A549 (cell line): ENCODE measurements at regions of chr9 and their contacts with region 1.

Region 1: GRCh38 chr9:133742849-133743444 is 4.8 kb upstream of the SARDH start:
- DNase-seq: peak; percentile 78 to 95
- ATAC-seq: peak; percentile 86 to 96
- H3K4me3 ChIP-seq: no peak overlapping the region
- H3K27ac ChIP-seq: no peak overlapping the region
- H3K4me1 ChIP-seq: no peaks in the 10 kb centered on the region; the same call in 2 of the 3 replicates
- CTCF ChIP-seq: peak; percentile 86
- EP300 ChIP-seq: no peak
- POLR2A ChIP-seq: no peak
- RAD21 ChIP-seq: peak; percentile 41 to 59; a peak in 3 of 5 replicates

Region 2: DNA sequence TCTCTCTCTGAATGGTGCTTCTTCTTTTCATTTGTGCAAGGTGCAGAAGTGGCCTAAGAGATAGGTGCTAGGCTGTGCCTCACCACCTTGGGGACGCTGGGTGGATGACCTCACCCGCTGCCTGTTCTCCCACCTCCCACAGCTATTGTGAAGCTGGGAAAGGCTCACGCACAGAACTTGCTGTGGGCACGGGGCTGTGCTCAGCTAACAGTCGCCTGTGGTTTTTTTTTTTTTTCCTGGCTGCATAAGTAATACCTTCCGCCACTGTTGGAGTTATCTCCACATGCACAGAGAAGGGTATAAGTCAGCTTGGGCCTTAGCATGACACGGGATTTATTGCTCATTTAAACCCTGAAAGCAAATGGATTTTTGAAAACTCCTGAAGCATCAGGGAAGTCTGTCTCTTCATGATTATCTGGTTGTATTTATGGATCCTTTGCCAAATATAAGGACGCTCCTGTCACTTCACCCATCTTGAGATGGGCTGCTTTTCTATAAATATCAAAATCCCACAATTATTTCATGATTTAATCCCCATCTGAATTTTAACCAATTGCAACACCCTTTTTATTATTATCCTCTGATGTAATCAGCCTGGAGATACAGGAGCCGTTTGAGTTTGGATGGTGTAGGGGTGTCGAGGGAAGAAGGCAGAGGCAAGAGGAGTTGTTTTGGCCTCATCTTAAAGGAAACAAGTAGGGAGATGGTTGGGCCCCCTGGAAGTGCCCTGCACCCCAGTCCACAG is 97.8 kb before region 1 on chr9:
- CTCF ChIA-PET with region 1: no interaction called
- POLR2A ChIA-PET with region 1: no interaction called
- DNase-seq: no peak
- ATAC-seq: no peak
- H3K4me3 ChIP-seq: no peak overlapping the region
- H3K27ac ChIP-seq: no peak overlapping the region
- H3K4me1 ChIP-seq: no peaks in the 10 kb centered on the region
- CTCF ChIP-seq: no peak
- EP300 ChIP-seq: no peak
- POLR2A ChIP-seq: no peak
- RAD21 ChIP-seq: no peak

Region 3: DNA sequence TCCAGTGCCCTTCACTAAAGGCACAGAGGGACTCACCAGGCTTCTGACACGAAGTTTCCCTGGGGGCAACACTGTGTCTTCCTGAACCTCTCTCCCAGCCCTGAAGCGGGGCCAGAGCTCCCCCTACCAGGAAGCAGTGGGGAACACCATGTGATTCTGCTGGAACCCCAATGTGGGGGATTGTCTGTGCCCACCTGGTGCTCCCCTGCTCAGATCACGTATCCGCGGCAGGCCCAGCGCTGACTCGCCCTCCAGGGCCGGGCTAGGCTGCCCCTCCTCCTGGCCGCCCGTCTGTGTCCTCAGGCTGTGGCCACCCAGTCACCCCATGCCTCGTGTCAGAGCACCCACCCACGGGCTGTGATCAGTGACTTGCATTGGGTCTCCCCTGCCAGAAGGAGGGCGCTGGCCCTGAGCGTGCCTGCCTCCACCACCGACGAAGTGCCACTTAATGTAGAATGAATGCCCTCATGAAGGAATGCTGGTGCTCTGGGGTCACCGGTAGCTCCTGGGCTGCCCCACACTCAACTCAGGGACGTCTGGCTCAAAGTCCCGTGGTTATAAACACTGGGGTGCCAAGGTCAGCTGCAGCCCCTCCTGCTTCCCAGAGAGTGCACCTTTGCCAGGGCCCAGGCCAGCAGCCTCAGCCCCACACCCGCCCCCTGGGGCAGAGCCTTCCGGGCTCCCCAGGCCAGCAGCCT is 26.9 kb before region 1 on chr9:
- CTCF ChIA-PET with region 1: interaction called, 16 read pairs
- POLR2A ChIA-PET with region 1: no interaction called
- DNase-seq: no peak
- ATAC-seq: peak; percentile 33 to 59; a peak in 4 of 6 replicates
- H3K4me3 ChIP-seq: no peak overlapping the region
- H3K27ac ChIP-seq: no peak overlapping the region
- H3K4me1 ChIP-seq: no peaks in the 10 kb centered on the region
- CTCF ChIP-seq: peak; percentile 29; the same call in 2 of the 3 replicates
- EP300 ChIP-seq: no peak
- POLR2A ChIP-seq: no peak
- RAD21 ChIP-seq: peak; percentile 35 to 56; a peak in 3 of 5 replicates

Region 4: DNA sequence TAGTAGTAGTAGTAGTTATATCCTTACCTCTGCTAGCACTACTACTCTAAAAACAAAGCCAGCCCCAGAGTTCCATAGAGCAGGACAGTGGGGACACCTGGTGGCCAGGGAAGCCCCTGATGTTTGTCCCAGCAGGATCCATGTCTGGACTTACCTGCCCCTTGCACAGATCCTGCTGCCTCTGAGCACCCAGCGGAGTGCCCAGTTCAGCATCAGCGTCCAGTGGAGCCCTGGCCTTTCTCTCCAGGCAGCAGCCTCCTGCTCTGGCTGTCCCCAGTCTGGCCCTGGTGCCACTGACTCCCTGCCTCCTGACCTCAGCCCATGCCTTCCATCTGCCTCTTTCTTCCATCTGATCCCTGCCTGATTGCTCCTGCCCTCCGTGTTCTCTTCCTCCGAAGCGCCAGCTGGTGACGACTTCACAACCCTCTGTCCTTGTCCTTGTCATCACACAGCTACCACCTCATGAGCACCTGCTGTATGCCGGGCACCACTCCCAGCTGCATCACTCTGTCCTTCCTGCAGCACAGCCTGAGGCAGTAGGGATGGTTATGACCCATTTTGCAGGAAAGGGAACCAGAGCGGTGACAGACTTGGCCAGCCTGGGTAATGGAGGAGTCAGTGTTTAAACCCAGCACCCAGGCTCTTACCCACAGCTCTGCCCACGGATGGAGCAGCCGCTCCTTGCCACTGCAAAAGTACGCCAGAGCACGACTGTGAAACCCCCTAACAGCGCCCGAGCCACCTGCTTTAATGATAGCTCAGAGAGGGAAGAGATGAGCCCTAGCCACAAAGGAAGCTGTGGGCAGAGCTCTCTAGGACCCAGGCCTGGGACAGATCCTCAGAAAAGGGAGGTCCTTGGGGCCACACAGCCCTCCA is 16.3 kb before region 1 on chr9:
- CTCF ChIA-PET with region 1: interaction called, 39 read pairs
- POLR2A ChIA-PET with region 1: no interaction called
- DNase-seq: peak; percentile 69 to 78
- ATAC-seq: peak; percentile 80 to 86
- H3K4me3 ChIP-seq: no peak overlapping the region
- H3K27ac ChIP-seq: no peak overlapping the region
- H3K4me1 ChIP-seq: no peaks in the 10 kb centered on the region
- CTCF ChIP-seq: peak; percentile 48; the same call in 2 of the 3 replicates
- EP300 ChIP-seq: no peak
- POLR2A ChIP-seq: no peak
- RAD21 ChIP-seq: peak; percentile 69 to 81

Region 5: DNA sequence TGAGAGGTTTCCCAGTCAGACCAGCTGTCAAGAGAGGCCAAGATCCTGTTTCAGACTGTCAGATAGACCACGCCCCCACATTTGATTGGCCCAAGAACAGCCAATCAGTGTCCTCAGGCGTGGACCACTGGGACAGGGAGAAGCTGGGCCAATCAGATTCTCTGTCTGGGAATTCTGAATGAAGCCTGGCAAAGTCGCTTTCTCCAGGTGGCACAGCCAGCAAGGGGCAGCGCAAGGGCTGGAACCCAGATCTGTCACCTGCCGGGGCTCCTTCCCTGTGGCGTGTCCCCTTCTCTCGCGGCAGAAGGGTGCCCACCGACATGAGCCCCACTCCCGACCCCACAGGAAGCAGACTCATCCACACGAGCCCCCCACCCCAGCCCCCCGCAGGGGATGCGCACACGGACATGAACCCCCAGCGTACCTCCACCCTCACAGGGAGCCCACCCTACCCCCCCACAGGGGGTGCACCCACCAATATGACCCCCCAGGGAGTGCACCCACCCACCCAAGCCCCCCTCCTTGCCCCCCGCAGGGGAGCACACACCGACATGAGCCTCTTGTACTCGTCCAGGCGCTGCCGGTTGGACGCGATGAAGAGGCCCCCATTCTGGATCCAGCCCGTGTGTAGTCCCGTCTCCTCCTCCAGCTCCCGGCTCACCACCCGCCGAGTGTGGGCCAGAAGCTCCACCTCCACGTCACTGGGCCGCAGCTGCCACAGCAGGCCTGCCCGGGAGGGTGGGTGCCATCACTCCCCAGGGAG is 10.9 kb before region 1 on chr9:
- CTCF ChIA-PET with region 1: interaction called, 39 read pairs
- POLR2A ChIA-PET with region 1: no interaction called
- DNase-seq: peak; percentile 63 to 74
- ATAC-seq: peak; percentile 10 to 71; a peak in 3 of 6 replicates
- H3K4me3 ChIP-seq: no peak overlapping the region
- H3K27ac ChIP-seq: no peak overlapping the region
- H3K4me1 ChIP-seq: no peaks in the 10 kb centered on the region
- CTCF ChIP-seq: no peak
- EP300 ChIP-seq: no peak
- POLR2A ChIP-seq: no peak
- RAD21 ChIP-seq: no peak

Region 6: GRCh38 chr9:133768859-133769425 is 26.0 kb after region 1 on chr9:
- CTCF ChIA-PET with region 1: interaction called, 17 read pairs
- POLR2A ChIA-PET with region 1: no interaction called
- DNase-seq: peak in 1 of 2 experiments; percentile 25
- ATAC-seq: peak; percentile 21 to 45; a peak in 3 of 6 replicates
- H3K4me3 ChIP-seq: no peak overlapping the region
- H3K27ac ChIP-seq: no peak overlapping the region
- H3K4me1 ChIP-seq: no peaks in the 10 kb centered on the region
- CTCF ChIP-seq: no peak
- EP300 ChIP-seq: no peak
- POLR2A ChIP-seq: no peak
- RAD21 ChIP-seq: no peak